Left ventricle myocardium inferior (tissue), 1 donor: ENCODE measurements at regions of chr5 and their contacts with region 1.

Region 1: GRCh38 chr5:91419571-91420537 is 36.7 kb upstream of the ARRDC3 start:
- DNase-seq: peak; percentile 22
- H3K4me3 ChIP-seq: no peak overlapping the region
- H3K27ac ChIP-seq: no peak overlapping the region
- H3K4me1 ChIP-seq: no peaks in the 10 kb centered on the region
- H3K27me3 ChIP-seq: no peaks in the 10 kb centered on the region
- CTCF ChIP-seq: peak; percentile 82

Region 2: DNA sequence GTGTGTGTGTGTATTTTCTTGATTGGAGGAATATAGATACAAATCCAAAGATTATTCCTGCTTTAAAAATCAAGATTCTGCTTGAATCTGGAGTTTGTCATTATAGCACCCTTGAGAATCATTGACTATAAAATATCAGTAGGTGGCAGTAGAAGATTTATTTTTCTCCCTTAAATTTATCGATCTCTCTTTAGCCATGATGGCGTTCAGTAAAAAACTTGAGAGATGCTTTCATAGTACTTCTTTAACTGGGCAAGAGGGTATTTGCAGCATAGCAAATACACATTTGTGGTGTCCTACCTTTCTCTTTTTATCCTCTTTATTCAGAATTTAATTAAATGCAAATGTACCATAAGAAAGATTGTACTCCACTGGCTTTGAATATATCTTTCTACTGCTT is 553.5 kb before region 1 on chr5:
- intact Hi-C with region 1: loop called (anchors 2 kb)
- DNase-seq: no peak
- H3K4me3 ChIP-seq: no peak overlapping the region
- H3K27ac ChIP-seq: no peak overlapping the region
- H3K4me1 ChIP-seq: peaks cover 11% of the 10 kb centered on the region
- H3K27me3 ChIP-seq: no peaks in the 10 kb centered on the region
- CTCF ChIP-seq: peak; percentile 66

Region 3: GRCh38 chr5:90932052-90932699 is 487.7 kb before region 1 on chr5:
- intact Hi-C with region 1: loop called (anchors 10 kb)
- DNase-seq: no peak
- H3K4me3 ChIP-seq: no peak overlapping the region
- H3K27ac ChIP-seq: no peak overlapping the region
- H3K4me1 ChIP-seq: peaks cover 10% of the 10 kb centered on the region
- H3K27me3 ChIP-seq: no peaks in the 10 kb centered on the region
- CTCF ChIP-seq: peak; percentile 85

Region 4: GRCh38 chr5:91318724-91319123 is 101.1 kb before region 1 on chr5:
- intact Hi-C with region 1: no loop called
- DNase-seq: no peak
- H3K4me3 ChIP-seq: no peak overlapping the region
- H3K27ac ChIP-seq: no peak overlapping the region
- H3K4me1 ChIP-seq: peaks cover 15% of the 10 kb centered on the region
- H3K27me3 ChIP-seq: no peaks in the 10 kb centered on the region
- CTCF ChIP-seq: no peak